ENCODE measurements at regions of chr5 and their contacts with region 1.

Region 1: GRCh38 chr5:109468737-109469420 is 59.1 kb upstream of the PJA2 start:
- DNase-seq: peak; percentile 90
- ATAC-seq: peak; percentile 97
- H3K4me3 ChIP-seq: no peak overlapping the region
- H3K27ac ChIP-seq: no peak overlapping the region
- H3K4me1 ChIP-seq: peaks cover 10% of the 10 kb centered on the region
- H3K27me3 ChIP-seq: no peaks in the 10 kb centered on the region
- CTCF ChIP-seq: peak; percentile 83

Region 2: DNA sequence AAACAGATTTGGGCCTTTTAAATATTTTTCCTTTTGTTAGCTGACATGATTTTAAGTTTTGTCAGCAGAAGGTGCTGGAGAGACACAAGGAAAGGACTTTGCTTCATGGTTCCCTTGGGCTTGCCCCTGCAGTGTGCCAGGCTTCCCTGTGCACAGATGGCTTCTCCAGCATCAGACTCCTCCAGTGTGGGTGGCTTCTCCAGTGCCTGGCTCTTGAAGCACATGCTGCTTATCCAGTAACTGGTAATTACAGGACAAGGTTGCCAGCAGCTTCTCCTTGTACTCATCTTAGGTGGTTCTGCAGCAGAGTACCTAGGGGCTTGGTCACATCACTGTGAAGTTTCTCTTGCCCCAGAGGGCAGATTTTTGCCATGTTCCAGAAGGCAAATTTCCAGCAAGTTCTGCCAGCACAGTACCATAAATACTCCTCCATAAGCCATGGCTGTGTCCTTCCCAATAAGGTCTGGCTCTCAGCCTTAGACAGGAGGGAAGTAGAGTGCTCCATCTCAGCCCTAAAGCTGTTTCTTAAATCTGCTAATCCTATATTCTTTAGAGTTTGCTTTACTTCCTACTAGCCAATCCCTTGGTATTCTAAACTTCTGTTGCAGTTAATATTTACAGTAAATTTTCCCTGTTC is 121.5 kb before region 1 on chr5:
- CTCF ChIA-PET with region 1: no interaction called
- POLR2A ChIA-PET with region 1: no interaction called
- intact Hi-C with region 1: loop called (anchors 10 kb)
- DNase-seq: no peak
- ATAC-seq: peak; percentile 27; the same call in 1 of the 2 replicates
- H3K4me3 ChIP-seq: no peak overlapping the region
- H3K27ac ChIP-seq: no peak overlapping the region
- H3K4me1 ChIP-seq: no peaks in the 10 kb centered on the region
- H3K27me3 ChIP-seq: no peaks in the 10 kb centered on the region
- CTCF ChIP-seq: no peak

Region 3: GRCh38 chr5:109409844-109410388 is 59.0 kb before region 1 on chr5 and contains the start of gene PJA2:
- CTCF ChIA-PET with region 1: no interaction called
- POLR2A ChIA-PET with region 1: no interaction called
- intact Hi-C with region 1: loop called (anchors 2 kb)
- DNase-seq: peak; percentile 99
- ATAC-seq: peak; percentile 83
- H3K4me3 ChIP-seq: peak within 1 kb of the TSS; percentile 88
- H3K27ac ChIP-seq: peak within 1 kb of the TSS; percentile 61
- H3K4me1 ChIP-seq: peaks cover 28% of the 10 kb centered on the region
- H3K27me3 ChIP-seq: no peaks in the 10 kb centered on the region
- CTCF ChIP-seq: no peak
- total RNA-seq, gene PJA2: 12.8 and 14.3 TPM in 2 replicates